ENCODE measurements at regions of chr2 and their contacts with region 1.

Region 1: GRCh38 chr2:230824406-230824978 is 40.2 kb upstream of the ITM2C start:
- DNase-seq: no peak

Region 2: GRCh38 chr2:230852113-230852512 is 27.6 kb after region 1 on chr2:
- intact Hi-C with region 1: no loop called
- DNase-seq: no peak

Region 3: DNA sequence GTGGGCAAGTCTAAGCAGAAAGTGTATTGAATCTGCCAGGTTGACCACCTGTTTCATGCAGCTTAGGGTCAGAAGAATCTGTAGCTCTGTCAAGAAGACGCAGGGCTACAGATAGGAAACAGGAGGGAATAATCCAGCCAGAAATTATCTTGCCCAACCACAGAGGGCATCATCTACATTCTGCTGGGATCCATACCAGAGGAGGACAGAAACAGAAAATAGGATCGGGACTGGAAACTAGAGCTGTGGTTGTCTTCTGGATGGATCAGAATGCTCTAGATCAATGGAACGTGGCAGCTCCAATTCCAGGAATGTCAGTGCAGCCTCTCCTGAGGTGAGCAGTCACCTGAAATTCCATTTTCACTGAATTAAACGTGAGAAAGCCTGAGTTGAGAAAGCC is 175.0 kb after region 1 on chr2:
- intact Hi-C with region 1: loop called in 1 of 2 experiments (anchors 10 kb)
- DNase-seq: no peak

Region 4: DNA sequence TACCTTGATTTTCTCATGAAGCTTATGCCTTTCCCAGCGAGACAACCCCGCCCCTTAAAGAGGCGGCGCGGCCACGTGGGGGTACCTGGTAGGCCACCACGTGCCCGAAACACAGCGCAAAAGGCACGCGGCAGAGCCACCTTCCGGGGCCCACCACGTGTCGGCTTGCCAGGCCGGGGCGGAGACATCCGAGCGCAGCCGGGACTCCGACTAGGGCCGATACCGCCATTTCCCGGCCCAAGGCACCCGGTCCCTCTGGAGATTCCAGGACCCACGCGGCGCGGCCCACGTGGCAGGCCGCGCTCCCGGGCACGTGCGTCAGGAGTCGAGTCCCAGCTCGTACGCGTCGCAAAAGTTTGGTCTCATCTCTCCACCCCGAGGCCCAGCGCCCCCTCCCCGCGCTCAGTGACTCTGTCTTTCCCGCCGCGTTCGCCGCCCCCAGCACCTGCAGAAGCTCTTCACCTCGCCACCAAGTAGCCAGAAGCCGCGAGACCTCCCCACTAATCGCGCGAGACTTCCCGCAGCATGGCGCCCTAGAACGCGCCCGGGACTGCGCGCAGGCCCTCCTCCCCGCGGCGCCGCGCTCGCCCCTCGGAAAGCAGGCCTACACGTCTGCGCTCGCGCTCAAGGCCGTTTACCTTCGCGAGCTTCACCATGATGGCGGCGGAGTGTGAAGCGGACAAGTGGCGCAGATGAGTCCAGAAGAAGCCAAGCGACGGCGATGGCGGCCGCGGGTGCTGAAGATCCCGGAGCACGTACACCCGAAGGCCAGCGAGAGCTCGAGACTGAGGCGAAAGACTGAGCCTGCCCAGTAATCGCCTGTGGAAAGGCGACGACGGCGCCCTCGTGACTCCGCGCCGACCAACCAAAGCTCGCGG is 639.4 kb after region 1 on chr2 and contains the start of gene NCL:
- intact Hi-C with region 1: no loop called
- DNase-seq: peak; percentile 96
- total RNA-seq, gene NCL: 341 to 448 TPM